SK-N-SH (cell line): ENCODE measurements at regions of chr7 and their contacts with region 1.

Region 1: DNA sequence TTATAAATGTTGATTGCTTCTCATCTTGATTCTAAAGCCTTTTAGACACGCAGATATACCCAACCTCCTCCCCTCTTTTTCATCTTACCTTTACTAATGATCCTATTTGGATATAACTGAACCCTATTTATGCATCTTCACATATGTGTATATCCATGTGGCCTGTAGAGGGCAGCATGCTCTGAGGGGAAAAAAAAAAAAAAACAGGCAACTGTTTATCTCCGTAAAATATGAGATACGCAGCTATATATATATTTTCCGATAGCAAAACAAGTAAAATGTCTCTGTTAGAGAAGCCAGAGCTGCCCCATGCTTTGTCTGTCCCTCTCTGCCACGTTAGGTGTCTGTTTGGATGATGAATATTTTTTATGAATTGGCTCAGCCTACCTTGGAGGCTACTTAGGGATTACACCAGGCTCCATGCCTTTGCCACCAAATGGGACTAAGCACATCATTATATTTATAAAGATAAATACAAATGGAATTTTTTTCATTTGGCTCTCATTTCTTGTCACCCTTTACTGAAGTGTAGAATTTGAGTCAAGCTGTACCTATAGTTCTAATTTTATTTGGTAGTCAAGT is 174.8 kb upstream of the FZD1 start:
- DNase-seq: peak; percentile 34
- H3K4me3 ChIP-seq: peak overlapping the region; percentile 19 to 41; a peak in 2 of 4 replicates
- H3K27ac ChIP-seq: peak overlapping the region in 1 of 2 experiments; percentile 8; a peak in 1 of 4 replicates
- H3K4me1 ChIP-seq: peaks cover 6 to 8% of the 10 kb centered on the region in 2 experiments; a peak in 2 of 4 replicates
- H3K27me3 ChIP-seq: no peaks in the 10 kb centered on the region
- CTCF ChIP-seq: peak; percentile 100
- EP300 ChIP-seq: no peak
- RAD21 ChIP-seq: peak; percentile 90

Region 2: GRCh38 chr7:90972906-90973550 is 116.4 kb before region 1 on chr7:
- CTCF ChIA-PET with region 1: no interaction called
- POLR2A ChIA-PET with region 1: no interaction called
- DNase-seq: no peak
- H3K4me3 ChIP-seq: no peak overlapping the region
- H3K27ac ChIP-seq: peak overlapping the region in 1 of 2 experiments; percentile 37; a peak in 1 of 4 replicates
- H3K4me1 ChIP-seq: no peaks in the 10 kb centered on the region; a peak in 1 of 4 replicates
- H3K27me3 ChIP-seq: no peaks in the 10 kb centered on the region
- CTCF ChIP-seq: no peak
- EP300 ChIP-seq: no peak
- RAD21 ChIP-seq: no peak

Region 3: DNA sequence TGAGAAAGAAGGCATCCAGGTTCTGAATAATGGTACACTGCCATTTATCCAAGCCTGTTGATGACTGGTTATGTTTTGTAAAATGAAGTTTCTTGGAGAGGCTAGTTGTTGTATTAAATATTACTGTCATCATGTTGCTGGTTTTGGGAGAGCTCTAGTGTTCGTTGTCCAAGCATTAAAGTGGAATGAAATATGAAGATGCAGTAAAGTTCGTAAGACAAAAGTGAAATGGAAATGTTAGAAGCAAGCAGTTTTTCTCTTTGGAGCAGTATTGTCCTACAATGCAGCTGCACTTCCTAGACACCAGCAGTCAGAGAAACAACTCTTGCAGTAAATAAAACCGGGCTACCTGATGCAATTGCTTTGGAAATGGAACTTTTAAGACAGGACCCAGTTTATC is 18.0 kb after region 1 on chr7:
- CTCF ChIA-PET with region 1: interaction called, 11 read pairs
- POLR2A ChIA-PET with region 1: no interaction called
- DNase-seq: no peak
- H3K4me3 ChIP-seq: no peak overlapping the region
- H3K27ac ChIP-seq: no peak overlapping the region
- H3K4me1 ChIP-seq: peaks cover 2 to 3% of the 10 kb centered on the region in 2 experiments; a peak in 3 of 4 replicates
- H3K27me3 ChIP-seq: no peaks in the 10 kb centered on the region
- CTCF ChIP-seq: no peak
- EP300 ChIP-seq: no peak
- RAD21 ChIP-seq: no peak

Region 4: DNA sequence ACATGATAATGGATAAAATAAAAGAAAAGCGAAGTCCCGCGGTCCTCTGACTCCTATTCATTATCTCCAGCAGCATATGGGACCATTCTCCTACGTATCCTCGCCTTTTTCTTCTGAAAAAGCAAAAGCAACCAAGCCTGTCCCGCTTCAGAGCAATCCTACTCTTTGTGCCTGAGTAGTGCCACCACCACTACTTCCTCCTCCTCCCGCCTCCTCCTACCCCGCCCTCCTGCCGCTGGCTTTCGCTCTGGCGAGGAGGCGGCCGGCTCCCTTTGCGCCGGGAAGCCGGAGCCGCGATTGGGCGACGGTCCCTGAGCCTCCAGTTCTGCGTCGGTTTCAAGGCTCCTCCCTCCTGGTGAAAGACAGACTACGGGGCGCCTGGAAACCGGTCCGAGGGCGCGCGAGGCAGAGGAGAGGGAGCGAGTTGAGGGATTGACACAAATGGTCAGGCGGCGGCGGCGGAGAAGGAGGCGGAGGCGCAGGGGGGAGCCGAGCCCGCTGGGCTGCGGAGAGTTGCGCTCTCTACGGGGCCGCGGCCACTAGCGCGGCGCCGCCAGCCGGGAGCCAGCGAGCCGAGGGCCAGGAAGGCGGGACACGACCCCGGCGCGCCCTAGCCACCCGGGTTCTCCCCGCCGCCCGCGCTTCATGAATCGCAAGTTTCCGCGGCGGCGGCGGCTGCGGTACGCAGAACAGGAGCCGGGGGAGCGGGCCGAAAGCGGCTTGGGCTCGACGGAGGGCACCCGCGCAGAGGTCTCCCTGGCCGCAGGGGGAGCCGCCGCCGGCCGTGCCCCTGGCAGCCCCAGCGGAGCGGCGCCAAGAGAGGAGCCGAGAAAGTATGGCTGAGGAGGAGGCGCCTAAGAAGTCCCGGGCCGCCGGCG is 174.8 kb after region 1 on chr7 and contains the start of gene FZD1:
- CTCF ChIA-PET with region 1: interaction called, 16 read pairs
- POLR2A ChIA-PET with region 1: no interaction called
- DNase-seq: peak; percentile 98
- H3K4me3 ChIP-seq: peak within 1 kb of the TSS; percentile 79 to 92
- H3K27ac ChIP-seq: peak within 1 kb of the TSS; percentile 79 to 95
- H3K4me1 ChIP-seq: peaks cover 0 to 31% of the 10 kb centered on the region in 2 experiments; a peak in 2 of 4 replicates
- H3K27me3 ChIP-seq: no peaks in the 10 kb centered on the region
- CTCF ChIP-seq: peak; percentile 33
- EP300 ChIP-seq: peak; percentile 59 to 85; a peak in 2 of 4 replicates
- RAD21 ChIP-seq: no peak; the same call in 1 of the 2 replicates
- polyA plus RNA-seq, gene FZD1: 3.3 and 3.8 TPM in 2 replicates

Region 5: DNA sequence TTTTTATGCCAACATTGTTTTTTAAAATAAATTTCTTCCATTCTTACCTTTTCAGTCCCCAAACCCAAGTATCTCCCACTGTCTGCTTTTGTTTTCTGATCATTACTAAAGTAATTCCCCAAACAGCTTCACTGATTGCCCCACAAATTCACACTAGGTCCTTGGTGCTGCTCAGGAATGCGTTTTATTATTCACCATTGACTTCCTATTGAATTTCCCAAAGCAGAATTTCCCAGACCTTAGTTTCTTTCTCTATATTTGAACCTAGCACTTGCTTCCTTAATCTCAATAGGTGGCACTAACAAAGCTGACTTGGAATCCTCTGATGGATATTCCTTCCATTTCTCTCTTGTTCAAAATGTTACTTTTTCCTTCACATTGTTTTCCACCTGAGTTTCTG is 227.0 kb after region 1 on chr7:
- CTCF ChIA-PET with region 1: no interaction called
- POLR2A ChIA-PET with region 1: no interaction called
- DNase-seq: no peak
- H3K4me3 ChIP-seq: no peak overlapping the region
- H3K27ac ChIP-seq: no peak overlapping the region
- H3K4me1 ChIP-seq: peaks cover 0 to 5% of the 10 kb centered on the region in 2 experiments; a peak in 2 of 4 replicates
- H3K27me3 ChIP-seq: no peaks in the 10 kb centered on the region
- CTCF ChIP-seq: no peak
- EP300 ChIP-seq: no peak
- RAD21 ChIP-seq: no peak

Region 6: GRCh38 chr7:91609525-91609924 is 520.1 kb after region 1 on chr7:
- CTCF ChIA-PET with region 1: interaction called, 37 read pairs
- POLR2A ChIA-PET with region 1: no interaction called
- DNase-seq: peak; percentile 39
- H3K4me3 ChIP-seq: no peak overlapping the region
- H3K27ac ChIP-seq: peak overlapping the region in 1 of 2 experiments; percentile 68; a peak in 2 of 4 replicates
- H3K4me1 ChIP-seq: peaks cover 0 to 11% of the 10 kb centered on the region in 2 experiments; a peak in 2 of 4 replicates
- H3K27me3 ChIP-seq: no peaks in the 10 kb centered on the region
- CTCF ChIP-seq: peak; percentile 31; the same call in 1 of the 2 replicates
- EP300 ChIP-seq: peak in 1 of 2 experiments; percentile 16; a peak in 1 of 4 replicates
- RAD21 ChIP-seq: peak; percentile 80

Region 7: DNA sequence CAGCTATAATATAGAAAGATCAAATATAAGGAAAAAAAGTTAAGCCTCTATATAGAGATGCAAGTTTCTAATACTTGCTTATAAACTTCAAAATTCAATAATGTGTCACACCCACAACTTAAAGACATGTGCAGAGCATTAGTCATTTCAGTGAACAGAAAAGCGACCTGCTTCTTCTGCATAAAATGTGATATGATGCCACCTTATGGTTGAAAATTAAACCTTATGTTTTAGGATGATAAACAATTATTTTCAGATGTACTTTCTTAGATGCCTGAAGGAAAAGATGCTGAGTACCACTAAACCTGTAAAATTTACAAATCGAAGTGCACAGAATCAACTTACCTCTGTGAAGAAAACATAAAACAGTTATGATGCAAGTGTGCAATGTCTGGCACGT is 695.0 kb after region 1 on chr7:
- CTCF ChIA-PET with region 1: interaction called, 27 read pairs
- POLR2A ChIA-PET with region 1: no interaction called
- DNase-seq: peak; percentile 32
- H3K4me3 ChIP-seq: no peak overlapping the region
- H3K27ac ChIP-seq: no peak overlapping the region
- H3K4me1 ChIP-seq: no peaks in the 10 kb centered on the region; a peak in 1 of 4 replicates
- H3K27me3 ChIP-seq: no peaks in the 10 kb centered on the region
- CTCF ChIP-seq: peak; percentile 70
- EP300 ChIP-seq: no peak
- RAD21 ChIP-seq: peak; percentile 84